MCF 10A (cell line): ENCODE measurements at regions of chr9 and their contacts with region 1.

Region 1: GRCh38 chr9:121059998-121060636 is 10.0 kb upstream of the C5 start:
- DNase-seq: peak; percentile 66
- H3K4me3 Mint-ChIP-seq: no peak overlapping the region
- H3K27ac Mint-ChIP-seq: no peak overlapping the region
- H3K4me1 Mint-ChIP-seq: no peaks in the 10 kb centered on the region
- H3K27me3 Mint-ChIP-seq: no peaks in the 10 kb centered on the region
- CTCF ChIP-seq: peak; percentile 53

Region 2: DNA sequence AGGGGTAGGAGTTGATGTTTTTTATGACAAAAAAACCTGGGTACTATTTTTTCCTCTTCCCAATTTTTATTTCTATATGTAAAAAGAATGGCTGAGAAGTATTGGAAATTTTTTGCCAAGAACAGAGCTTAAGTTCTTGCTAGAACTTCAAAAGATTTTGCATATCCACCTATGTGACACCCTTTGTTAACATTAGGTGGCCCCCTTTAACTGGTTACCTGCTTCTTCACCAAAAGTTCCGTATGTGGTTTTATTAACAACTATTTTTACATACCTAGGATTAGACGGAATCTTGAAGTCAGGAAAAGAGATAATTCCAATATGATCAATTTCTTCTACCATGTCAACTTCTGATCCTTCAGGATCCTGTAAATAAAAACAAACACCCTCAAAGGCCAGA is 25.6 kb before region 1 on chr9:
- CTCF ChIA-PET with region 1: interaction called, 16 read pairs
- POLR2A ChIA-PET with region 1: no interaction called
- intact Hi-C with region 1: no loop called
- DNase-seq: no peak
- H3K4me3 Mint-ChIP-seq: no peak overlapping the region
- H3K27ac Mint-ChIP-seq: no peak overlapping the region
- H3K4me1 Mint-ChIP-seq: no peaks in the 10 kb centered on the region
- H3K27me3 Mint-ChIP-seq: no peaks in the 10 kb centered on the region
- CTCF ChIP-seq: no peak

Region 3: DNA sequence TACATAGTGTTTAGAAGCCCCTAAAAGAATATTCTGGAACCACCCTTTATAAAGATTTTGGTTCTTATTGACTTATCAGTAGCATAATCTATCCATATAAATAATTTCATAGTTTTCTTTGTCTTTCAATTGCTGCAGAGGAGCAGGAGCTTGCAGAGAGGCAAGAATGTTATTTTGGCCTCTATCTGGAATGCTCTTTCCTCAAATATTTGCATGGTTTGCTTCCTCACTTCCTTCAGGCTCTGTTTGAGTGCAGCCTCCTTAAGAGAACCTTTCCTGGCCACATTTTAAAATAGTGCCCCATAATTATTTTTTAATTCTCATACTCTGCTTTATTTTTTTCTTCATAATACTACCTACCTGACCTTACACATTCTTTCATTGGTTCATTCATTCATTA is 11.5 kb before region 1 on chr9:
- CTCF ChIA-PET with region 1: interaction called, 27 read pairs
- POLR2A ChIA-PET with region 1: no interaction called
- intact Hi-C with region 1: no loop called
- DNase-seq: no peak
- H3K4me3 Mint-ChIP-seq: no peak overlapping the region
- H3K27ac Mint-ChIP-seq: no peak overlapping the region
- H3K4me1 Mint-ChIP-seq: no peaks in the 10 kb centered on the region
- H3K27me3 Mint-ChIP-seq: no peaks in the 10 kb centered on the region
- CTCF ChIP-seq: no peak

Region 4: DNA sequence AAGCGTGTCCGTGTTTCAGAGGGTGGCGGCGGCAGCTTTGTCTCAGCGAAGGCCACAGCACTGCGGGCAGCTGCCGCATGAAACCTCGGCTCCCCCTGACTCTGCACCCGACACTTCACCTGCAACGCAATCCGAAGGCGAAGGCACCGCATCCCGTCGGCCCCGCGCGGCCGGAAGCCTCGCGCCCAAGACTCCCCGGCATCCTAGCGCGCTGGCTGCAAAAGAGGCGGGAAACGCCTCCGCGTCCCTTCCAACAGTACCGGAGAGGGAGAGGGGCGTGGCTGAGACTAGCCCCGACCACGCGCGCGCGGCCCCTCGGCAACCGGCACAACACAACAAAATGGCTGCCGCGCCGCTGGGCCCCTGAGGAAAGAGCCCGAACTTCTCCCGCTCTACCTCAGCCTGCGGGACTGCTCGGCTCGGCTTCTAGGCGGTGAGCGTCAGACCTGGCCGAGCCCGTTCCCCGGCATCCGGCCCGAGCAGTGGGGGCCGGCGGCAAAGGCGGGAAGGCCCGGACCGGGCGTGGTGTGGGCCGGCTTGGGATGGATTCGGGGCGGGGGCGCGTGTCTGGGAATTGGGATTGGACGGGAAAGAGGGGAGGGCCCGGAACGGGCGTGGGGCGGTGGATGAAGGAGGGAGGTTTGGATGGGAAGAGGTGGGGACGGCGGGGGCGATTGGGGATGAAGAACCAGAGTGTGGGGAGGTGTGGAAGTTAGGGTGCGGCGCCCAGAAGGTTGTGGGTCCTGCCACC is 14.7 kb after region 1 on chr9 and contains the start of gene CNTRL:
- CTCF ChIA-PET with region 1: interaction called, 62 read pairs
- POLR2A ChIA-PET with region 1: interaction called, 8 read pairs
- intact Hi-C with region 1: no loop called
- DNase-seq: peak; percentile 92
- H3K4me3 Mint-ChIP-seq: peak within 1 kb of the TSS; percentile 92
- H3K27ac Mint-ChIP-seq: peak within 1 kb of the TSS; percentile 91
- H3K4me1 Mint-ChIP-seq: peaks cover 22% of the 10 kb centered on the region
- H3K27me3 Mint-ChIP-seq: no peaks in the 10 kb centered on the region
- CTCF ChIP-seq: no peak
- total RNA-seq, gene CNTRL: 11.6 and 18.9 TPM in 2 replicates

Region 5: DNA sequence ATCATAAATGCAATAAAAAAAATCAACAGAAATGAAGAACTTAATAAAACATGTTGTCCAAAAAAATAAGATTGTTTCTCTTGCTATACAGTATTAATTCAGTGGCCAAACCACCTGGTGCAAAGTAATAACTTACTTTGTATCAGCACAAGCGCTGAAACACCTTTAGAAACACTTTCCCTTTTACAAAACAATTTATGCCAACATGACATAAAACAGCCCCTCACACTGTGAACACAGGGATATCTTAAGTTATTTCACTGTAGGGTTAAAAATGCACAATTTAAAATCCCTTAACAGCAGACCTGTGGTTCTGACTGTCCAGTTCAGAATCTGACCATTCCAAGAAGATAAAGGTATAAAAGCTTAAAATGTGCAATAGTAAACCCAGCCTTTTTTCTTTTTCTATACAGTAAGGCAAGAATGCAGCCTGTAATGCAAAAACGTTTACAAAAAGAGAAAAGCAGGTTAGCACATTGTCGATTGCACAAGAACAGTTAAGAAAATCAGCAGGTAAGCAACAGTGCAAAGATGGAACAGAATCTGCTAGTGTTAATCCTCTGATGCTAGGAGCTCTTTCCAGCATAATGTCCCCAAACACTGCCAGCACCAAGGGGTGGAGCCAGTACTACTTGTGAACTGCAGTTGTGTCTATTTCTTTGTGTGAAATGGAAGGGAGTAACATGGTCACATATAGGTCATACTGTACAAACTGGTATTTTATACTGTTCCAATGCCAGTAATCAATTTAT is 120.0 kb after region 1 on chr9:
- CTCF ChIA-PET with region 1: no interaction called
- POLR2A ChIA-PET with region 1: no interaction called
- intact Hi-C with region 1: no loop called
- DNase-seq: no peak
- H3K4me3 Mint-ChIP-seq: no peak overlapping the region
- H3K27ac Mint-ChIP-seq: peak overlapping the region; percentile 23
- H3K4me1 Mint-ChIP-seq: no peaks in the 10 kb centered on the region
- H3K27me3 Mint-ChIP-seq: no peaks in the 10 kb centered on the region
- CTCF ChIP-seq: no peak

Region 6: DNA sequence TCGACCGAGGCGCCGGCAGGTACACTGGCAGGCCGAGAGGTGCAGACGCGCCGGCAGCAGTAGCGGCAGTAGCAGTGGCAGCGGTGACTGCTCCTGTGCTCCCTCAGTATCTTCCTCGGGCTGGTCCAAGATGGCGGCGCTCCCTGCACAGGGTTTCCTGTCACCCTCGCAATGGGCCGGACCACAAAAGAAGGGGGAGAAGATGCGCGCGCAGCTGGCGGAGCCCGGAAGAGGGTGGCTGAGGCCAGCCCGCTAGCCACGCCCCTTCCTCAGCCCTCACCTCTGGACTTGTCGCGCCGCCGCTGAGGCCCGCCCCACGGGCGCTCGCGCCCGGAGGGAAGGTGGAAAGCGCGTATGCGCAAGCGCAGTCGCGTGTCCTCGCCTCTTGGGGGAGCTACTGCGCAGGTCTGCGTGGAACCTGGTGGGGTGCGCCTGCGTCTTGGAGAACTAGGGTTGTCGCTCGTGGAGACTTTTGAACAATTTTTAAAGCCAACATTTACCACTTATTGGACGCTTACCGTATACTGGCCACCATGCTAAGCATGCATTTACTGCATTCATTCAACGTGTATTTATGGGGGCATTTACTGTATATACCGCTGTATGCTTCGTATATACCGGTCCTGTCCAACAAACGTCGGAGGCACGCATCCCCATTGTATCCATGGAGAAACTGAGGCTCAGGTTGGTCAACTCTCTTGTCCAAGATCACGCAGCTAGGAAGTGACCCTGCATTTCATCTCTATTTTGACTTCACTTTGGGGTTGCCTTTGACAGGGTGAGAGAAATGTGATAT is 141.8 kb after region 1 on chr9 and contains the start of gene RAB14:
- CTCF ChIA-PET with region 1: no interaction called
- POLR2A ChIA-PET with region 1: no interaction called
- intact Hi-C with region 1: no loop called
- DNase-seq: peak; percentile 98
- H3K4me3 Mint-ChIP-seq: peak within 1 kb of the TSS; percentile 83
- H3K27ac Mint-ChIP-seq: peak within 1 kb of the TSS; percentile 81
- H3K4me1 Mint-ChIP-seq: peaks cover 26% of the 10 kb centered on the region
- H3K27me3 Mint-ChIP-seq: no peaks in the 10 kb centered on the region
- CTCF ChIP-seq: peak; percentile 47
- total RNA-seq, gene RAB14: 65.8 and 77.0 TPM in 2 replicates

Region 7: GRCh38 chr9:121499427-121500164 is 439.5 kb after region 1 on chr9 and contains the start of gene GGTA1:
- CTCF ChIA-PET with region 1: no interaction called
- POLR2A ChIA-PET with region 1: no interaction called
- intact Hi-C with region 1: no loop called
- DNase-seq: peak; percentile 37
- H3K4me3 Mint-ChIP-seq: peak within 1 kb of the TSS; percentile 73
- H3K27ac Mint-ChIP-seq: no peak within 1 kb of the TSS
- H3K4me1 Mint-ChIP-seq: peaks cover 18% of the 10 kb centered on the region
- H3K27me3 Mint-ChIP-seq: peaks cover 22% of the 10 kb centered on the region
- CTCF ChIP-seq: no peak
- total RNA-seq, gene GGTA1: not detected in 2 replicates

Region 8: GRCh38 chr9:122190609-122191381 is 1130.7 kb after region 1 on chr9:
- CTCF ChIA-PET with region 1: no interaction called
- POLR2A ChIA-PET with region 1: no interaction called
- intact Hi-C with region 1: no loop called
- DNase-seq: no peak
- H3K4me3 Mint-ChIP-seq: no peak overlapping the region
- H3K27ac Mint-ChIP-seq: no peak overlapping the region
- H3K4me1 Mint-ChIP-seq: no peaks in the 10 kb centered on the region
- H3K27me3 Mint-ChIP-seq: no peaks in the 10 kb centered on the region
- CTCF ChIP-seq: no peak